ENCODE measurements at regions of chr11 and their contacts with region 1.

Region 1: DNA sequence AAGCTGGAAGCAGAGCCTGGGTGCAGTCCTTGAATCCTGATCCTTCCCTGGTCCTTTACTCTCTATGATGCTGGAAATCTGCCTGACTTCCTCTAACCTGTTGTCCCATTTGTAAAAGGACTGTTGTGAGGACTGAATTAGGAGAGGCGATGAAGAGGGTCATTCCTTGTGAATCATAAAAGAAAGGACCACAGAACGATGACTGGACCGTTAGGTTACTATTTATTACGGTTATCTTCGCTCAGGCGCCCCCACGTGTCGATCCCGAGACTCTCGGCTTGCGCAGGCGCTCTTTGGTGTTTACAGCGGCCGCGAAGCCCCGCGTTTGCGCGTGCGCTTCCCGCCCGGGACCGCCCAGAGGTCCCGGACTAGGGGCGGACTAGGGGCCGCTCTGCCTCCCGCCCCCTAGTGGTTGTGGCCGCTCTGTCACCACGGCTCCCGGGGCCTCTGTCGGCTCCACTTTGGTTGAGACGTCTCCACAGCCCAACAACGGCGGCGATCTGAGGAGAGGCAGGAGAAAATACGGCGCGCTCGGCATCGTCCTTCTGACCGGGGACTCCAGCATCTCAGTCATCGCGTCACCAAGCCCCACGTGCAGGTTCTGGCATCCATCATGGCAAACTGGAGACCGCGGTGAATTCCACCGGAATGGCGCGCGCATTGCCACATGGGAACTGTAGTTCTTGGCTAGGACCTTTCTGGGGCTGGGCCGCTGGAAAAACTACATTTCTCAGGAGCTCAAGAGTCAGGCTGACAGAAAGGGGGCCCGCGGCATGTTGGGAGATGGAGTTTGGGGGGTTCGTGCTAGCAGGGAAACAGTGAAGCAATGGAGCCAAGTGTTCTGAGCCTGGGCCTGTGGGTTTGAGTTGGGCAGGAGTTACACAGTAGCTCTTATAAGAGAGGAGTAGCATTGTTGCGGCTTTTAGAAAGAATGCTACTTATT is at the start of gene STARD10:
- DNase-seq: peak; percentile 79
- ATAC-seq: peak; percentile 98
- H3K4me3 ChIP-seq: peak within 1 kb of the TSS; percentile 66
- H3K27ac ChIP-seq: peak within 1 kb of the TSS; percentile 77
- H3K4me1 ChIP-seq: peaks cover 11% of the 10 kb centered on the region
- H3K27me3 ChIP-seq: no peaks in the 10 kb centered on the region
- CTCF ChIP-seq: peak; percentile 84 to 95 (median 95)
- EP300 ChIP-seq: no peak
- POLR2A ChIP-seq: peak; percentile 81
- RAD21 ChIP-seq: peak; percentile 58
- polyA plus RNA-seq, gene STARD10: 0.15 to 0.21 TPM

Region 2: GRCh38 chr11:71908218-71908617 is 885.5 kb before region 1 on chr11:
- CTCF ChIA-PET with region 1: no interaction called
- POLR2A ChIA-PET with region 1: no interaction called
- RAD21 ChIA-PET with region 1: no interaction called
- SMC1A ChIA-PET with region 1: no interaction called
- in situ Hi-C with region 1: no loop called
- intact Hi-C with region 1: no loop called
- DNase-seq: no peak
- ATAC-seq: no peak
- H3K4me3 ChIP-seq: no peak overlapping the region
- H3K27ac ChIP-seq: no peak overlapping the region
- H3K4me1 ChIP-seq: no peaks in the 10 kb centered on the region
- H3K27me3 ChIP-seq: no peaks in the 10 kb centered on the region
- CTCF ChIP-seq: no peak
- EP300 ChIP-seq: no peak
- POLR2A ChIP-seq: no peak
- RAD21 ChIP-seq: no peak

Region 3: DNA sequence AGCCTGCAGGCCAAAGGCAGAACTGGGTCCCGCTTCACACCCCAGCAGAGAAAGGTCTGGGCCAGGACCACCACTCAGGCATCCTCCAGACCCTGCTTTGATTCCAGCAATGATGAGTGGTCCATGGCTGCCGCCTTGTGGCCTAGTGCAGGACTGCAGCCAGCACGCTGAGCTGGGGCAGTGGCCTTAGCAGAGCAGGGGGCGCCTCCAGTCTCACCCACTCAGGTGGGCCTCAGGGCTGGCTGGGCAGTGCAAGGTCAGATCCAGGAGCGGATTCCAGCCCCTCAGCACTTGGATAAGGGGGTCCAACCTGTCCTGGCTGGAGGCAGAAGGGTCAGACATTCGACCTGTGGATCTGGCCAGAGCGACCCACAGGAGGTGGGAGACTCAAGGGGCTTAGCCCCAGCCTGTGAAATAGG is 109.9 kb before region 1 on chr11:
- CTCF ChIA-PET with region 1: interaction called, 45 read pairs
- POLR2A ChIA-PET with region 1: no interaction called
- RAD21 ChIA-PET with region 1: interaction called, 7 read pairs
- SMC1A ChIA-PET with region 1: interaction called, 10 read pairs
- in situ Hi-C with region 1: no loop called
- intact Hi-C with region 1: no loop called
- DNase-seq: no peak
- ATAC-seq: peak; percentile 83
- H3K4me3 ChIP-seq: no peak overlapping the region
- H3K27ac ChIP-seq: no peak overlapping the region
- H3K4me1 ChIP-seq: no peaks in the 10 kb centered on the region
- H3K27me3 ChIP-seq: no peaks in the 10 kb centered on the region
- CTCF ChIP-seq: peak; percentile 89 to 99 (median 98)
- EP300 ChIP-seq: no peak
- POLR2A ChIP-seq: peak; percentile 49; the same call in 1 of the 2 replicates
- RAD21 ChIP-seq: peak; percentile 84

Region 4: DNA sequence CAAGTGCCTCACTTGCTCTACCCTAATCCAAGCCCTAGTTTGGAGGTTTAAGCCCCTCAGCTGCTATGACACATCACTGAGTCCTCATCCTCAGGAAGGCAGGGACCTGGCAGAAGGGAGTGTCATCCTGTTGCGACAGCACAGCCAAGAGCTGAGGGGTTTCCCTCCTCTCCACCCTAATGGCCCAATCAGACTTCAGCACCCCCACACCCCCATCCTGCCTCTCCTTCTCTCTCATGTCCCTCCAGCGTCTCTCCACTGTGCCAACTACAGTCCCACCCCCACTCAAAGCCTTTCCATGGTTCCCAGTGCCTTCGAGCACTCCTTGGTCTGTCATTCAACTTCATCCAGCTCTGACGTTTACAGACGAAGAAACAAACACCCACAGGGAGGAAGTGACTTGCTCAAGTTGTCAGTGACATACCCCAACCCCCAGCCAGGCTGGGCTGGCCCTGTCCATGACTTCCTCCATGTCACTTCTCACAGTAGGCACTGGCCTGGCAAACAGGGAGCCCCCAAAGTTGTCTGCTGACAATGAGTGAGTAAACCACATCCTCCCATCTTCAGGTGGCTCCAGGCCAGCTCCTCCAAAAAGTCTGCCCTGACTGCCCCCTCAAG is 57.1 kb before region 1 on chr11:
- CTCF ChIA-PET with region 1: interaction called, 469 read pairs
- POLR2A ChIA-PET with region 1: interaction called, 40 read pairs
- RAD21 ChIA-PET with region 1: interaction called, 256 read pairs
- SMC1A ChIA-PET with region 1: interaction called, 185 read pairs
- in situ Hi-C with region 1: no loop called
- intact Hi-C with region 1: loop called (anchors 5 kb)
- DNase-seq: no peak
- ATAC-seq: peak; percentile 26
- H3K4me3 ChIP-seq: peak overlapping the region; percentile 25
- H3K27ac ChIP-seq: peak overlapping the region; percentile 72
- H3K4me1 ChIP-seq: peaks cover 54% of the 10 kb centered on the region
- H3K27me3 ChIP-seq: no peaks in the 10 kb centered on the region
- CTCF ChIP-seq: no peak
- EP300 ChIP-seq: no peak
- POLR2A ChIP-seq: no peak
- RAD21 ChIP-seq: no peak

Region 5: GRCh38 chr11:72752088-72752914 is 41.4 kb before region 1 on chr11 and contains the start of gene ARAP1:
- CTCF ChIA-PET with region 1: interaction called, 21 read pairs
- POLR2A ChIA-PET with region 1: interaction called, 4 read pairs
- RAD21 ChIA-PET with region 1: interaction called, 10 read pairs
- SMC1A ChIA-PET with region 1: interaction called, 30 read pairs
- in situ Hi-C with region 1: no loop called
- intact Hi-C with region 1: loop called (anchors 2 kb)
- DNase-seq: no peak
- ATAC-seq: peak; percentile 83
- H3K4me3 ChIP-seq: peak within 1 kb of the TSS; percentile 99
- H3K27ac ChIP-seq: peak within 1 kb of the TSS; percentile 80
- H3K4me1 ChIP-seq: peaks cover 33% of the 10 kb centered on the region
- H3K27me3 ChIP-seq: no peaks in the 10 kb centered on the region
- CTCF ChIP-seq: 0 out of 6 replicates have a peak, but pooled peaks of 1 of the 3 experiments have one; percentile 5
- EP300 ChIP-seq: no peak
- POLR2A ChIP-seq: peak; percentile 74; the same call in 1 of the 2 replicates
- RAD21 ChIP-seq: no peak
- polyA plus RNA-seq, gene ARAP1: 0.55 to 0.85 TPM

Region 6: GRCh38 chr11:72781313-72782050 is 12.2 kb before region 1 on chr11:
- CTCF ChIA-PET with region 1: interaction called, 65 read pairs
- POLR2A ChIA-PET with region 1: interaction called, 19 read pairs
- RAD21 ChIA-PET with region 1: interaction called, 24 read pairs
- SMC1A ChIA-PET with region 1: interaction called, 13 read pairs
- in situ Hi-C with region 1: no loop called
- intact Hi-C with region 1: no loop called
- DNase-seq: no peak
- ATAC-seq: peak; percentile 76
- H3K4me3 ChIP-seq: peak overlapping the region; percentile 56
- H3K27ac ChIP-seq: no peak overlapping the region
- H3K4me1 ChIP-seq: peaks cover 11% of the 10 kb centered on the region
- H3K27me3 ChIP-seq: no peaks in the 10 kb centered on the region
- CTCF ChIP-seq: no peak
- EP300 ChIP-seq: no peak
- POLR2A ChIP-seq: no peak
- RAD21 ChIP-seq: no peak